HCT116 (cell line): ENCODE measurements at regions of chr9 and their contacts with region 1.

Region 1: GRCh38 chr9:74742792-74743730 is 144.7 kb downstream of the TRPM6 start:
- DNase-seq: peak; percentile 19
- ATAC-seq: peak; percentile 81
- H3K4me3 ChIP-seq: no peak overlapping the region
- H3K27ac ChIP-seq: no peak overlapping the region
- H3K4me1 ChIP-seq: no peaks in the 10 kb centered on the region
- H3K27me3 ChIP-seq: 0 out of 2 replicates have a peak, but pooled peaks cover 6% of the 10 kb centered on the region
- CTCF ChIP-seq: peak; percentile 50 to 88 (median 71); a peak in 5 of 6 replicates
- POLR2A ChIP-seq: no peak
- RAD21 ChIP-seq: peak; percentile 72

Region 2: GRCh38 chr9:73683862-73684591 is 1059.0 kb before region 1 on chr9:
- CTCF ChIA-PET with region 1: no interaction called
- POLR2A ChIA-PET with region 1: no interaction called
- RAD21 ChIA-PET with region 1: no interaction called
- intact Hi-C with region 1: loop called (anchors 2 kb)
- DNase-seq: peak; percentile 19
- ATAC-seq: peak; percentile 63; the same call in 1 of the 2 replicates
- H3K4me3 ChIP-seq: no peak overlapping the region
- H3K27ac ChIP-seq: no peak overlapping the region
- H3K4me1 ChIP-seq: no peaks in the 10 kb centered on the region
- H3K27me3 ChIP-seq: no peaks in the 10 kb centered on the region
- CTCF ChIP-seq: peak; percentile 24 to 58 (median 42); a peak in 4 of 6 replicates
- POLR2A ChIP-seq: no peak
- RAD21 ChIP-seq: peak; percentile 68

Region 3: DNA sequence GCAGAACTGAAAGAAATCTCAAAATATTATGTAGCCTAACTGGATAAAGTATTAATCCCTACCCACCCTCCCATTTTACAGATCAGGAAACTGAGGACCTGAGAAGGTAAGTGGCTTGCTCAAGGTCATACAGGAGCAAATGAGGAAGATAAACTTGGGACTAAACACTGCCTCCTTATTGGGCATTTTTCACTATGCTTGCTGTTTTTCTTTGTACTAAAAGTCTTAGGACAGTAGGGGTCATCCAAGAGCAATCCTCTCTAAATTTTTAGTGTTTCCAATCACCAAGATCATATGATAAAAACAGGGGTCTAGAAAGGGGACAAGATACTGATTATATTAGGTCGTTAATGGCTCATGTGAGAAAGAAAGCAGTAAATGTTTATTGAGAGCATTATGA is 165.1 kb before region 1 on chr9:
- CTCF ChIA-PET with region 1: no interaction called
- POLR2A ChIA-PET with region 1: no interaction called
- RAD21 ChIA-PET with region 1: no interaction called
- intact Hi-C with region 1: loop called (anchors 5 kb)
- DNase-seq: peak; percentile 1
- ATAC-seq: peak; percentile 67
- H3K4me3 ChIP-seq: no peak overlapping the region
- H3K27ac ChIP-seq: no peak overlapping the region
- H3K4me1 ChIP-seq: no peaks in the 10 kb centered on the region
- H3K27me3 ChIP-seq: peaks cover 59% of the 10 kb centered on the region
- CTCF ChIP-seq: peak; percentile 25 to 48 (median 44); a peak in 5 of 6 replicates
- POLR2A ChIP-seq: no peak
- RAD21 ChIP-seq: no peak

Region 4: GRCh38 chr9:74760031-74760698 is 17.1 kb after region 1 on chr9:
- CTCF ChIA-PET with region 1: no interaction called
- POLR2A ChIA-PET with region 1: no interaction called
- RAD21 ChIA-PET with region 1: no interaction called
- intact Hi-C with region 1: loop called (anchors 2 kb)
- DNase-seq: no peak
- ATAC-seq: no peak
- H3K4me3 ChIP-seq: no peak overlapping the region
- H3K27ac ChIP-seq: no peak overlapping the region
- H3K4me1 ChIP-seq: no peaks in the 10 kb centered on the region
- H3K27me3 ChIP-seq: no peaks in the 10 kb centered on the region
- CTCF ChIP-seq: no peak
- POLR2A ChIP-seq: no peak
- RAD21 ChIP-seq: no peak